ENCODE measurements at regions of chr17 and their contacts with region 1.

Region 1: DNA sequence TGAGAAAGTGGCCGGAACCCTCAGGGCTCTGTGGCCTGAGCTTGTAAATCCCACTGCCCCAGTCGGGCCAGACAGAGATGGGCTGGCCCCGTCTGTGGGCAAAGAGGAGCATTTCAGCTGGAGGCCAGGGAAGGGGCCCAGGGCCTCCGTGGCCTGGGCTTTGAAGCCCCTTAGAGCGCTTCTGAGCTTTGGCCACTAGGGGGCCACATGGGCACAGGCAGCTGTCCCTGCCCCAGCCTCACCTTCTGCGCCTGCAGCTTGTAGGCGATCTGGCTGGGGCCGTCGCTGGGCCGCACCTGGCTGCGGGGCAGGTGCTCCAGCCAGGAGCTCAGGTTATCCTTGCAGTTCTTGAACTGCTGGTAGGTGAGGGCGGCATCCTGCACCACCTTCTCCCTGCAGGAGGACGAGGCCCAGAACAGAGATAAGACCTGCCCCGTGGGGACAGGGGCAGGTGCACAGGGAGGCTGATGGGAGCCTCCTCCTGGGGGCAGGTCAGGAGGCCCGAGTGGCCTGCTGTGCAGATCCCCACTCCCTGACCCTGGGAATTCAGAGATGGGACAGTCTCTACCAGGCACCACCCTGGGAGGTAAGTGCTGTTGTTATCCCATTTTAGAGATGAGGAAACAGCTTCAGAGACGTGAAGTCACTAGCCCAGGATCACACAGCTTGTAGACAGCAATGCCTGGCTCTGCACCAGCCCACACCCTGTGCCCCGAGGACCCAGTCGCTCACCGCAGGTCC is 12.8 kb downstream of the EVPL start:
- DNase-seq: peak; percentile 86
- ATAC-seq: peak; percentile 77

Region 2: DNA sequence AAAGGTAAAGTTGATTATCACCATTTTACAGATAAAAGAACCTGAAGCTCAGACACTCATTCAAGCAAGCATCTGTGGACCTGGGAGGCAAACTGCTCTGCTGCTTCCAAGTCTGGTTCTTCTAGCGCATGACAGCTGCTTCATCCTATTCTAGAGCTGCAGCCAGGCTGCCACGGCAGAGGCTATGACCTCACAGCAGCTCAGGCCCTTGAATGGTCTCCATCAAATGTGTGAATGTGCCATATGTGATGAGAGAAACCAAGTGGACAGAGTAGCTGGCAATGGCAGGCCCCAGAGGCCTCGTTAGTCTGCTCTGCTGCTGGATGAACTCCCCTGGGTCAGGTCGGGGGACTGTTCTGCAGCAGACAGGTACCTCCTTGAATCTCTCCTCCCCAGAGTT is 157.4 kb after region 1 on chr17:
- intact Hi-C with region 1: no loop called
- DNase-seq: no peak
- ATAC-seq: no peak

Region 3: DNA sequence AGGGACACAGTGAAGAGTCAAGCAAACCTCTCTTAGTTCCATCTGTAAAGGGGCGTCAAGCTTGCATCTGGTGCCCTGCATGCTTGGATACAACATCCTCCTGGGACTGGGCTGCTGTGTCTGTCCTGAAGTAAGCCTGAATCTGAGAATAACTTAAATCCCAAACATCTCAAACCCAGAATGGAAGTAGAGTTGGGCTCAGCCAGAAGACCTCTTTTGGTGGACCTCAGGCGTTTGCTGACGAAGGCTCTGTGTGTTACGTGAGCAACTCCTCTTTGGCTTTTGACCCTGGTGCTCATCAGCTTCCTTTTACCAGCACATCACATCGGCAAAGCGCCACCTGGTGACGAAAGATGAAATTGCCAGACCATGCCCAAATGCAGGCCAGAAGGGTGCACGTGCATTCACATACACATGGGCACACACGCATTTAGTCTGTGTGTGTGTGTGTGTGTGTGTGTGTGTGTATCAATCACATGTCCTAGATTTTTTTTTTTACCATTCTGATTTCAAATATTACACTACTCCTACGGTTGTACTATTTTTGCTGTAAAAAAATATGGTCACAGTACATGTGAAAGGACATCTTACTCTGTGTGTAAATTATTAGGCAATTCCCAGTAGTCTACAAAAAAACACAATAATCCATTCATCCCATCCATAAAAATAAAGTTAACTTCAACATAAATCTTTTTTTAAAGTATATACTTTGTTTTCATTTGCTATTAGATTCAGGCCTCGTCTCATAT is 167.8 kb after region 1 on chr17:
- intact Hi-C with region 1: loop called (anchors 5 kb)
- DNase-seq: peak; percentile 93
- ATAC-seq: peak; percentile 87

Region 4: GRCh38 chr17:76296186-76296585 is 281.8 kb after region 1 on chr17:
- intact Hi-C with region 1: loop called (anchors 5 kb)
- DNase-seq: no peak
- ATAC-seq: peak; percentile 82